Activated CD8-positive, alpha-beta T cell treated with anti-CD3 and anti-CD28 coated beads, Interleukin-2, amount 10 ng/mL, durations not matched to agents 7 days and 5 days (primary cell): ENCODE measurements at regions of chr4 and their contacts with region 1.

Region 1: DNA sequence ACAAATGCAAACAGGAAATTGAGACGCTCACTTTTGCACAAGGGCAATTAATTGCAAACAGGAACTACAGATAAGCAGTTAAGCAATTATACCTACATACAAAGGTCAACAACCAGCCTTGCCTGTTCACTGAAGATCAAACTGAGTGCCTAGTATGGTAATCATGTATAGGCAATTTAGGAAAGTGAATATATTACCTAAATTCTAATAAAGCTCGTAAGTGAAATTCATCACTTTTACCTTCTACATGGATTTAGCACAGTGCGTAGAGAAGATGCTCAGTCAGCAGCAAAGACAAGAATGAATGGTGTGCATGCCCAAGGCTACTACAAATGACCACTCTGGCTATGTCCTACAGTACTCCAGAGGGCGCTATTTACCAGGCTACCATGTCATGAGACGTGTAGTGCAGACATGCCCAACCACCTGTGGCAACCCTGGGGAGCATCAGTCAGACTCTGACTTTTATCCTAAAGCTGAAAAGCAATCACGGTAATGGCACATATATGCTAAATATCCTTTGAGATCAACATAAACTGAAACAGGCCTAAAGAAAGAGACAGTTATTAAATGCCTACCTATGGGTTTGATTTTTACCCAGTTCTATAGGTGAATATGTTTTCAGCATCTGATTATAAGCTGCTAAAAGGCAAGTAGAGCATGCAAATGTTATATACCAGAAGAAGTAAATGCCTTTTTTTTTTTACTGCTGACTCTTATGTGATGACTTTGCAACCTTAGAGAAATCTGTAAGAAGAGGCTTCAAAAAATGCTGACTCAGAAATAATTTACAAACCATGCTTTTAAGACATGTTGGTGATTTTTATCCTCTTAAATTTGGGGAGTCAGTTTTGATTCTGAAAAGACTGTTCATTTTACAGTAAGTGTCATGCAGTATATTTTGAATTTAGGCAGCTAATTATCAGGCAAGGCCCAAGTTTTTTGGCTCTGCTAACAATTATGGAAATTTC is 178.0 kb downstream of the PPP3CA start:
- DNase-seq: peak; percentile 74
- ATAC-seq: peak; percentile 93
- H3K4me3 Mint-ChIP-seq: no peak overlapping the region
- H3K27ac Mint-ChIP-seq: no peak overlapping the region
- H3K4me1 Mint-ChIP-seq: no peaks in the 10 kb centered on the region
- H3K27me3 Mint-ChIP-seq: no peaks in the 10 kb centered on the region

Region 2: DNA sequence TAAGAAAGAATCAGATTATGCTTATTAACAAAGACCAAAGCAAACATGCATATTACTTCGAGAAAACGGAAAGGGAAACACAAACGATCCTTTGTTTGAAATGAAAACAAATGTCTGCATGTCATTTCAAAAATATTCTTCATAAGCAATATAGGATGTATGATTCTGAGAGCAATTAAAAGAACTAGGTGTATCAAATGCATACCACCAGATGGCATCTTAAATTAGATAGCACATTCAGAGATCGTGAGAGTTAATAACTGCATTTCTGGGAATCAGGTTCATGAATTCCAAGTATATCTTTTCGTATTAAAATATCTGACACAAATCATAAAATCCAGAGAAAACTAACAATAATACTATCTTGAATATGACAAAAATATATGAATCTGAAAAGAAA is 18.5 kb after region 1 on chr4:
- CTCF ChIA-PET with region 1: interaction called, 15 read pairs
- POLR2A ChIA-PET with region 1: no interaction called
- DNase-seq: no peak
- ATAC-seq: no peak
- H3K4me3 Mint-ChIP-seq: no peak overlapping the region
- H3K27ac Mint-ChIP-seq: no peak overlapping the region
- H3K4me1 Mint-ChIP-seq: peaks cover 19% of the 10 kb centered on the region
- H3K27me3 Mint-ChIP-seq: no peaks in the 10 kb centered on the region

Region 3: DNA sequence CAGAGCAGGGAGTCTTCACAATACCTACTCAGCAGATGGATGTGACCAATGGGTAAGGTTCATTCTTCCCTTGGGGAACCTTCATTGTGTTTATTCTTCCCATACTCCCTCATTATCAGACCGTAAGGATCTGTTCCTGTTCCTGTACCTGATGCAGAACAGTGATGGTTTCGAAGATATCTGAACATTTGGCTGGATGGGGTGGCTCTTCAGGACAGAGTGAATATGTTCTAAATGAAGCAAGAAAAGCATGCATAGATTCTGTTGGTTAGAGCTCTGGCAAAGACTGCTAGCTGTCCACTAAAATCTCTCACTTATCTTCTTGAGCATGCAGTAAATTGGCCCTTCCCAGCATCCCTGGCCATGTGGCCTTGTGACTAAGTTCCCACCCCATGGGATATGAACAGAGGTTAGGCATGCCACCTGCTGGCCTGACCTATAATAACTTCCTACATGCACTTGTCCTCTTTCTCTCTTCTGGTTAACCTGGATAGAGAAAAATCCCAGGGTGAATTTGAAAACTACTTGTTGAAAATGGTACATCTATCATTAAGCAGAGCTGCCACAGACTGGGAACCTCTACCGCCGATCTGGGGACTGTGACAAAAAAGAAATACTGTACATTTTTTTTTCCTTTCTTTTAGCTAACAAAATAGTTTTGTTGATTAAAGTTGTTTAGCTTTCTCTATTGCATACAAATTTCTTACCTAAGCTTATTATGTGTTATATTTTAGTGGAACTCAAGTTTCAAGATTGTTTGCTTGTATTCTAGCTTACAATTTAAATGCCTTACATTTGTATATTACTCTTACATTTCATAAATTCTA is 561.2 kb after region 1 on chr4:
- CTCF ChIA-PET with region 1: interaction called, 31 read pairs
- POLR2A ChIA-PET with region 1: no interaction called
- DNase-seq: peak; percentile 62
- ATAC-seq: peak; percentile 74
- H3K4me3 Mint-ChIP-seq: no peak overlapping the region
- H3K27ac Mint-ChIP-seq: no peak overlapping the region
- H3K4me1 Mint-ChIP-seq: no peaks in the 10 kb centered on the region
- H3K27me3 Mint-ChIP-seq: peaks cover 11% of the 10 kb centered on the region